Activated CD4-positive, alpha-beta T cell treated with anti-CD3 and anti-CD28 coated beads, Interleukin-2, amount 10 ng/mL, durations not matched to agents 24 days and 14 days (primary cell): ENCODE measurements at regions of chr17 and their contacts with region 1.

Region 1: GRCh38 chr17:36089888-36090836 is at the start of gene CCL3:
- DNase-seq: peak; percentile 71
- H3K4me3 Mint-ChIP-seq: peak within 1 kb of the TSS; percentile 55
- H3K27ac Mint-ChIP-seq: peak within 1 kb of the TSS; percentile 90
- H3K4me1 Mint-ChIP-seq: peaks cover 42% of the 10 kb centered on the region
- H3K27me3 Mint-ChIP-seq: peaks cover 15% of the 10 kb centered on the region
- total RNA-seq, gene CCL3: 403 and 414 TPM in 2 replicates

Region 2: GRCh38 chr17:34378664-34379101 is 1711.5 kb before region 1 on chr17:
- intact Hi-C with region 1: loop called (anchors 10 kb)
- DNase-seq: peak; percentile 79
- H3K4me3 Mint-ChIP-seq: peak overlapping the region; percentile 71
- H3K27ac Mint-ChIP-seq: peak overlapping the region; percentile 59
- H3K4me1 Mint-ChIP-seq: peaks cover 64% of the 10 kb centered on the region
- H3K27me3 Mint-ChIP-seq: peaks cover 4% of the 10 kb centered on the region

Region 3: DNA sequence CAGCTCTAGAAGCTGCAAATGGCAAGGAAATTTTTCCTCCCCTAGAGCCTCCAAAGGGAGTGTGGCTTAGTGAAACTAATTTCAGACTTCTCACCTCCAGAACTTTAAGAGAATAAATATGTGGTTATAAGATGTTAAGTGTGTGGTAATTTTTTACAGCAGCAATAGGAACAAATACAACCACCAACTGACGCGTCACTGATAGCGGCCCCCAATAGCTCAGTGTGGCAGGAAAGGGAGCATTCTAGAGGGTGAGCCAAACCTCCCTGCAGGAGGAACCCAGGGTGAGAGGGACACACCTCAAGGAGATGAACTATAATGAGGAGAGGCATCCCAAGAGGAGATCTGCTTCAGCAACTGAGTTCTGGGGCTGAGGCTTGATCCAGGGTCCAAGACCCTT is 17.5 kb after region 1 on chr17:
- intact Hi-C with region 1: loop called (anchors 1 kb)
- DNase-seq: no peak
- H3K4me3 Mint-ChIP-seq: no peak overlapping the region
- H3K27ac Mint-ChIP-seq: no peak overlapping the region
- H3K4me1 Mint-ChIP-seq: peaks cover 10% of the 10 kb centered on the region
- H3K27me3 Mint-ChIP-seq: peaks cover 5% of the 10 kb centered on the region

Region 4: DNA sequence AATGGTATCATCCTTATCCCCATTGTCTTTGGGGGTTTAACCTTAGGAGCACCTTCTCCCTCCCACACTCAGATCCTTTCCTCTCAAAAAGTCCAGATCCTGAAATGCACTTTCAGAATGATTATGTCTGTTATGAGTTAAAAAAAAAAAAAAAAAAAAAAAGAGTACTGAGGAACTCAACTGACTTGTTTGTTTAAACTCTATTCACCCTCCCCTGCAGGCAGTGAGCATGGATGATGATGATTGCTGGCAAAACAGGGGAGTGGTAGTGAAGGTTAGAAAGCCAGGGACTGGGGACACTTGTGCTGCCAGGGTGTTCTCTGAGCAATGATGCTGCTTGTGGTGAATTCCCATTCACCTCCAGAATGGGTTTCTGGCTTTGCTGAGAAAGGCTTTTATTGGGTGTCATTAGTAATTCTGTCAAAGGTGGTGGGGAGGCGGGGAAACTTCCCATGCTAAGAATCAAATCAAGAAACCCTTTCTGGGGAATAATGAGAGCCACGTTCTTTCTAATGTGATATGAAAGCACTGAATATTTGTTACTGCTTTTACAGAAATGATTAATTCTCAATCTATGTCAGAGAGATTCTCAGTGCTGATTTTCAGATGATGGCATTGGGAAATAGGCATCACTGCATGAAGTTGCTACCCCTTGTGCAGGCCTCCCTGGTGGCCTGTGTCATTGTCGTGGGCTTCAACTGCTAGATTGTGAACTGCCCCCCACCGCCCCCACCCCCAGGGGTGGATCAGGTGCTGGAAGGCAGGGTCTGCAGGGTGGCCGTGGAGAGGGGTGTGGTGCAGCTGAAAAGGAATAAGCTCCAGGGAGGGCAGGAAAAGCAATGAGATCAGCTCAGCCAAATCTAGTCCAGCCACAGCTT is 27.6 kb after region 1 on chr17:
- intact Hi-C with region 1: loop called (anchors 1 kb)
- DNase-seq: no peak
- H3K4me3 Mint-ChIP-seq: no peak overlapping the region
- H3K27ac Mint-ChIP-seq: peak overlapping the region; percentile 81
- H3K4me1 Mint-ChIP-seq: peaks cover 13% of the 10 kb centered on the region
- H3K27me3 Mint-ChIP-seq: no peaks in the 10 kb centered on the region

Region 5: DNA sequence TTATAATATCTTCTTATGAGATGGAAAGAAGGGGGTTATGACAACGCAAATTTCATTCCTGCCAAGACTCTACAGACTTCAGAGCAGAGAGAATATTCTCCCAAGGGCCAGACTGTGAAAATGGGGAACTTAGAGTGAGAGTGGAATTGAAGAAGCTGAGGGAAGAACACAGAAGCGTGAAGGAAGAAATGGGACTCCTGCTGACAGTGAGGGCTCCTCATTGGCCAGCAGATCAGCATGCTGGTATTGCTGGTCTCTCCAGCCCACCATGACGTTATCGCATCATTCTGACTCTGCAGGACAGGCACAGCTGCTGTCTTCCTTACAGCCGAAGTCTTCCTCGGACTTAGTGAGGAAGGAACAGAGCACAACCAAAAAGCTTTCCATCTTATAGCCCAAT is 37.7 kb after region 1 on chr17:
- intact Hi-C with region 1: no loop called
- DNase-seq: no peak
- H3K4me3 Mint-ChIP-seq: no peak overlapping the region
- H3K27ac Mint-ChIP-seq: no peak overlapping the region
- H3K4me1 Mint-ChIP-seq: no peaks in the 10 kb centered on the region
- H3K27me3 Mint-ChIP-seq: peaks cover 17% of the 10 kb centered on the region